ENCODE measurements at regions of chr1 and their contacts with region 1.

Region 1: GRCh38 chr1:236292425-236292824 is 10.7 kb upstream of the ERO1B start:
- DNase-seq: no peak
- CTCF ChIP-seq: no peak

Region 2: GRCh38 chr1:236269439-236269838 is 23.0 kb before region 1 on chr1:
- CTCF ChIA-PET with region 1: no interaction called
- POLR2A ChIA-PET with region 1: no interaction called
- DNase-seq: no peak
- CTCF ChIP-seq: no peak

Region 3: GRCh38 chr1:236282425-236282716 is 10.1 kb before region 1 on chr1:
- CTCF ChIA-PET with region 1: interaction called, 12 read pairs
- POLR2A ChIA-PET with region 1: no interaction called
- DNase-seq: peak; percentile 21
- CTCF ChIP-seq: no peak

Measured in GM10248 (cell line).